HEK293 (cell line): ENCODE measurements at regions of chr2 and their contacts with region 1.

Region 1: GRCh38 chr2:64865073-64865830 is 123.9 kb upstream of the SLC1A4 start:
- H3K4me3 ChIP-seq: peak overlapping the region; percentile 35
- H3K27ac ChIP-seq: peak overlapping the region; percentile 76
- H3K4me1 ChIP-seq: peaks cover 4% of the 10 kb centered on the region; the same call in 1 of the 2 replicates
- CTCF ChIP-seq: no peak

Region 2: GRCh38 chr2:64586883-64587481 is 278.3 kb before region 1 on chr2:
- CTCF ChIA-PET with region 1: interaction called, 25 read pairs
- POLR2A ChIA-PET with region 1: no interaction called
- H3K4me3 ChIP-seq: no peak overlapping the region
- H3K27ac ChIP-seq: no peak overlapping the region
- H3K4me1 ChIP-seq: no peaks in the 10 kb centered on the region
- CTCF ChIP-seq: no peak; the same call in 1 of the 2 replicates

Region 3: GRCh38 chr2:64919261-64919660 is 54.0 kb after region 1 on chr2:
- CTCF ChIA-PET with region 1: no interaction called
- POLR2A ChIA-PET with region 1: no interaction called
- H3K4me3 ChIP-seq: no peak overlapping the region
- H3K27ac ChIP-seq: no peak overlapping the region
- H3K4me1 ChIP-seq: no peaks in the 10 kb centered on the region
- CTCF ChIP-seq: no peak